Right ventricle myocardium inferior (tissue), 1 donor: ENCODE measurements at regions of chr15 and their contacts with region 1.

Region 1: GRCh38 chr15:85642693-85643066 is 152.0 kb downstream of the KLHL25 start:
- DNase-seq: peak; percentile 85
- ATAC-seq: peak; percentile 88

Region 2: DNA sequence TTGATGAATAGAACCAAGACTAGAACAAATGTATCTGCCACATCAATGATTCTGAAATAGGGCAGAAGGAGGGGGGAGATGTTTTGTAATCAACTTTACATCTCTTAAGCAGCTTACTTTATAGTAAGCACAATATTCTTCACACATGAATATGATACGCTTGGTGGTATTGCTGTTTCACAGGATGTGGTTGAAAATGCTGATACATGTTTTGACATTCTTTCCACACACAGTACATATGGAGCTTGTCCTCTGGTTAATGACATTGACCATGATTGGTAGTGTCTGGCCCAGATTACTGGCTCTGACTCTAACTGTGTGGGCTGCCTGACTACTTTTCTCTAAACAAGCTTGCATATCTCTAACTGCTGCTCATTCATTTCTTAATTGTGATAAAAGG is 16.8 kb before region 1 on chr15:
- intact Hi-C with region 1: loop called (anchors 2 kb)
- DNase-seq: no peak
- ATAC-seq: peak; percentile 37